Activated CD4-positive, alpha-beta T cell treated with anti-CD3 and anti-CD28 coated beads for 36 hours (primary cell): ENCODE measurements at regions of chr20 and their contacts with region 1.

Region 1: GRCh38 chr20:4956200-4956810 is 45.0 kb downstream of the SLC23A2 start:
- DNase-seq: no peak
- ATAC-seq: peak; percentile 77
- H3K4me3 Mint-ChIP-seq: no peak overlapping the region
- H3K27ac Mint-ChIP-seq: no peak overlapping the region
- H3K4me1 Mint-ChIP-seq: peaks cover 15% of the 10 kb centered on the region
- H3K27me3 Mint-ChIP-seq: no peaks in the 10 kb centered on the region

Region 2: DNA sequence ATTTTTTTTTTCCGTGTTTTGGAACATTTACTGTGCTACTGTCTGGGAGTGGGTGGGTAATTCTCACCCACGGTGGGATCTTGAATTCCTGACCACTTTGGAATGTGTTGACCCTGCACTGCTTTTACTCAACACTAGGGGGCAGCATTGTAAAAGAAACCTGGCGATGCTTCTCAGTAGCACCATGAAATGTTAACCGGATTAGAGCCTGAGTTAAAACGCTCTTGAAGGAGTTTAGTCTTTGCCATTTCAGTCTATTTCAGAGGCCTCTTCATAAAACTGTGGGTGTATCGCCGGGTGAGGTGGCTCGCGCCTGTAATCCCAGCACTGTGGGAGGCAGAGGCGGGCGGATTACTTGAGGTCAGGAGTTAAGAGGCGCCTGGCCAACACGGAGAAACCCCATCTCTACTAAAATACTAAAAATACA is 349.0 kb before region 1 on chr20:
- CTCF ChIA-PET with region 1: interaction called, 3 read pairs
- POLR2A ChIA-PET with region 1: interaction called, 4 read pairs
- intact Hi-C with region 1: loop called (anchors 5 to 10 kb)
- DNase-seq: peak; percentile 69
- ATAC-seq: peak; percentile 90
- H3K4me3 Mint-ChIP-seq: no peak overlapping the region
- H3K27ac Mint-ChIP-seq: no peak overlapping the region
- H3K4me1 Mint-ChIP-seq: peaks cover 2% of the 10 kb centered on the region
- H3K27me3 Mint-ChIP-seq: peaks cover 5% of the 10 kb centered on the region

Region 3: DNA sequence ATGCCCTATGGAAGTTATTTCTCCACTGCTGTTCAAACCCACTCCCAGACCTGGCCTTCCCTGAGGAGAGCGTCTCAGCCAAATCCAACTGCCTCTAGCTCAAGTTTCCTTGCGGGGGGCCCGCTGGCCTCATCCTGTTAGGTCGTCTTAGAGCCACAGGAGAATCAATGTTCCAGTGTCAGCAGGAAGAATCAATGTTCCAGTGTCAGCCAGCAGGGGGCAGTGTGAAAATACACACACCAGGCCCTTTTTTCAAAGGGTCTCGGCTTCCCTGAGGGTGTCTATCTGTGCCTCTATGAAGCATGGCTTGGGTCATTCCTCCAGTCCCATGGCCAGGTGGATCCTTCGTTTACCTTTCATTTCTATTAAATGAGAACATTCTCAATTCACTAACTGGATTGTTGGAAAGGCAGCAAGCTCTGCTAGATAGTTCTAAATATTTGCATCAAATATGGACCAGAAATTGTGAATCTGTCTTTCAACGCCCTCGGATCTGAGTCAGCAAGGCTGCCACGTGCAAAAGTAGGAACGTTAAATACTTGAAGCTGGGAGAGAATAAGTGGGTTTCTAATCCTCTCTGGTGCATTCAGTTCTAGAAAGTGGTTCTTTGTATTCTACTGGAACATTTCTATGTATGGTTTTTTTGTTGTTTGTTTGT is 215.4 kb before region 1 on chr20:
- CTCF ChIA-PET with region 1: interaction called, 7 read pairs
- POLR2A ChIA-PET with region 1: no interaction called
- intact Hi-C with region 1: loop called in 1 of 2 experiments (anchors 5 kb)
- DNase-seq: peak; percentile 82
- ATAC-seq: peak; percentile 61
- H3K4me3 Mint-ChIP-seq: no peak overlapping the region
- H3K27ac Mint-ChIP-seq: no peak overlapping the region
- H3K4me1 Mint-ChIP-seq: peaks cover 3% of the 10 kb centered on the region
- H3K27me3 Mint-ChIP-seq: peaks cover 5% of the 10 kb centered on the region

Region 4: GRCh38 chr20:4813863-4814695 is 142.2 kb before region 1 on chr20:
- CTCF ChIA-PET with region 1: interaction called, 17 read pairs
- POLR2A ChIA-PET with region 1: no interaction called
- intact Hi-C with region 1: no loop called
- DNase-seq: peak; percentile 69
- ATAC-seq: peak; percentile 73
- H3K4me3 Mint-ChIP-seq: peak overlapping the region; percentile 96
- H3K27ac Mint-ChIP-seq: peak overlapping the region; percentile 100
- H3K4me1 Mint-ChIP-seq: peaks cover 73% of the 10 kb centered on the region
- H3K27me3 Mint-ChIP-seq: no peaks in the 10 kb centered on the region

Region 5: DNA sequence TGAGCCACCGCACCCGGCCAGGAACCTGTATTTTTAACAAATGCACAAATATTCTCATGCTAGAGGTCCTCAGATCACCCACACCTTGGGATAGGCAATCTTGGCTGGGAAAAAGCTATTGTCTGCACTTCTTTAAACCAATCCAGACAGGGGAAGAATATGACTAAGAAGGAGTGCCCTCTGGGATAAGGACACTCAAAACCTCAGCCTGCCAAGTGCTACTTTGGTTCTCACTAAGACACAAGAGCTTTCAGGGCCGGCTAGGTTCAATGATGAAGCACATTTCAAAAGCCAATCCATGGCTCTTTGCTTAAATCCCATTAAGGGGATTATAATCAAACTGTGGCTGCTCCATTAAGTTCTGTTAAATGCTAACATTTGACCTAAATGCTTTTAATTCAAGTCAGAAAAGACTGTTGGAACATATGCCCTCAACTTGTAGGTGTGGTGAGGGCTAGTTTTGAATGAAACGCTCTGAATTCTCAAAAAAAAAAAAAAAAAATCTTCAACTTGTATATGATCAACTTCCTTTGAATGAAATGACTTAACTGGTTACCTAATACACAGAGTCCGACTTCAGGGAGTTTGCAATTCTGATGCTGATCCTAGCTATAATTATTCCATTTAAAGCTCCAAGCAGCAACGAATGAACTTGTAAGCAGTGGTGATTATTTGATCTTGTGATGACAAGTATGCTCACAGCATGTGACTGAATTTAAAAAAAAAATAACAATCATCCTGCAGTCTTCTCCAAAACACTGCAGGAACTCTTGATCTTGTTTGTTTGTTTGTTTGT is 11.6 kb before region 1 on chr20:
- CTCF ChIA-PET with region 1: interaction called, 18 read pairs
- POLR2A ChIA-PET with region 1: no interaction called
- intact Hi-C with region 1: no loop called
- DNase-seq: no peak
- ATAC-seq: no peak
- H3K4me3 Mint-ChIP-seq: no peak overlapping the region
- H3K27ac Mint-ChIP-seq: no peak overlapping the region
- H3K4me1 Mint-ChIP-seq: peaks cover 31% of the 10 kb centered on the region
- H3K27me3 Mint-ChIP-seq: no peaks in the 10 kb centered on the region

Region 6: GRCh38 chr20:4966826-4967751 is 10.8 kb after region 1 on chr20:
- CTCF ChIA-PET with region 1: interaction called, 14 read pairs
- POLR2A ChIA-PET with region 1: no interaction called
- intact Hi-C with region 1: no loop called
- DNase-seq: no peak
- ATAC-seq: no peak
- H3K4me3 Mint-ChIP-seq: no peak overlapping the region
- H3K27ac Mint-ChIP-seq: no peak overlapping the region
- H3K4me1 Mint-ChIP-seq: peaks cover 8% of the 10 kb centered on the region
- H3K27me3 Mint-ChIP-seq: no peaks in the 10 kb centered on the region

Region 7: GRCh38 chr20:4973330-4974097 is 17.2 kb after region 1 on chr20:
- CTCF ChIA-PET with region 1: interaction called, 11 read pairs
- POLR2A ChIA-PET with region 1: no interaction called
- intact Hi-C with region 1: no loop called
- DNase-seq: peak; percentile 65
- ATAC-seq: peak; percentile 72
- H3K4me3 Mint-ChIP-seq: peak overlapping the region; percentile 8
- H3K27ac Mint-ChIP-seq: peak overlapping the region; percentile 43
- H3K4me1 Mint-ChIP-seq: peaks cover 27% of the 10 kb centered on the region
- H3K27me3 Mint-ChIP-seq: no peaks in the 10 kb centered on the region